Heart left ventricle (tissue), 16 donors: ENCODE measurements at regions of chr9 and their contacts with region 1.

Region 1: DNA sequence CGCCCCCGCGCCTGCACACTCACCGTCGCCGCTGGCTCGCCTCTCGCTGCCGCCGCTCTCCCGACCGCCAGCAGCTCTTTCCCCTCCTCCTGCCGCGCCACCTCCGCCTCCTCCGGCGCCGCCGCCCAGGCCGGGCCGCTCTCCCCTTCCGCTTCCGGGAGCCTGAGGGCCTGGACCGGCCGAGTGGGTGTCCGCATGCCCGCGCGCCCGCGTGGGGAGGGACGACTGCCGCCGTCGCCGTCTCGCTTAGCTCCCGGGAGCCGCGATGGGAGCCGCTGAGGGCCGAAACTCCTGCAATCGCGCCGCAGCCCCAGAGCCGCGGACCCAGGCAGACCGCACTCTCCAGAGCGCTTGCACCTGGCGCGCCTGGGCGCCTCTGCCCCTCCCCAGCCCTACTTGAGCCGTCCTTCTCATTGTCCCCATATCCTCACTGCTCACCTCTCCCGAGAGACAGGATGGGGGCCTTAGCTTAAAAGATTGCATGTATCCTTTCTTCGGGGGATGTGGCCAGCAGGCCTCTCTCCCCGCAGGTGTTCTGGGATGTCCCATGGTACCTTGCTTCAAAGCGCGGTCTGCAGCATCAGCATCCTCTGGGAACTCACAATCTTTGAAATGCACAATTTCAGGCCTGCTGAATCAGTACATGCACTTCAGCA is at the start of gene ZDHHC21:
- DNase-seq: peak; percentile 78 to 89 (median 83)
- ATAC-seq: peak; percentile 88 to 99 (median 98)
- H3K4me3 ChIP-seq: peak within 1 kb of the TSS; percentile 70 to 95 (median 79)
- H3K27ac ChIP-seq: peak within 1 kb of the TSS in 10 of 12 donors; percentile 24 to 75 (median 60)
- H3K4me1 ChIP-seq: peaks cover 0 to 17% (median 8%) of the 10 kb centered on the region in 12 donors
- H3K27me3 ChIP-seq: peaks cover 0 to 5% (median 0%) of the 10 kb centered on the region in 9 donors
- CTCF ChIP-seq: no peak
- POLR2A ChIP-seq: peak in 1 of 2 donors; percentile 38
- total RNA-seq, gene ZDHHC21: 5.2 to 9.3 (median 7.7) TPM

Region 2: DNA sequence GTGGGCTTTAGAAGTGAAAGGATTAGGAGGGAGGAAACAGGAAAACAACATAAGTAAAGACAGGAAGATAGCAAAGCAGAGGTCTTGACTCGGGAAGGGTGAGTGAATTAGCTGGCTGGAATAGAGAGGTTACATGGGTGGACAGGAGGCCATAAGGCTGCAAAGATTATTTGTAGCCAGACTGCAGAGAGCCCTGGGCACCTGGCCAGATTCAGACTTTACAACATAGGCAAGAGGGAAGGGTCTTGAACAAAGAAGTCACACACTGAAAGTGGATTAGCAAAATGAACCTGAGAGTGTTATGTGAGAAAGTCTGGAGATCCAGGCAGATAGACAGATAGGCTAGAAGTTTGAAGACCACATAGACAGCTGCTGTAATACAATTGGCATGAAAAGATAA is 58.9 kb after region 1 on chr9:
- intact Hi-C with region 1: loop called in 1 of 10 experiments (anchors 10 kb)
- DNase-seq: no peak
- ATAC-seq: no peak
- H3K4me3 ChIP-seq: no peak overlapping the region
- H3K27ac ChIP-seq: no peak overlapping the region
- H3K4me1 ChIP-seq: peaks cover 0 to 7% (median 0%) of the 10 kb centered on the region in 12 donors
- H3K27me3 ChIP-seq: no peaks in the 10 kb centered on the region
- CTCF ChIP-seq: no peak
- POLR2A ChIP-seq: no peak